ENCODE measurements at regions of chr13 and their contacts with region 1.

Region 1: DNA sequence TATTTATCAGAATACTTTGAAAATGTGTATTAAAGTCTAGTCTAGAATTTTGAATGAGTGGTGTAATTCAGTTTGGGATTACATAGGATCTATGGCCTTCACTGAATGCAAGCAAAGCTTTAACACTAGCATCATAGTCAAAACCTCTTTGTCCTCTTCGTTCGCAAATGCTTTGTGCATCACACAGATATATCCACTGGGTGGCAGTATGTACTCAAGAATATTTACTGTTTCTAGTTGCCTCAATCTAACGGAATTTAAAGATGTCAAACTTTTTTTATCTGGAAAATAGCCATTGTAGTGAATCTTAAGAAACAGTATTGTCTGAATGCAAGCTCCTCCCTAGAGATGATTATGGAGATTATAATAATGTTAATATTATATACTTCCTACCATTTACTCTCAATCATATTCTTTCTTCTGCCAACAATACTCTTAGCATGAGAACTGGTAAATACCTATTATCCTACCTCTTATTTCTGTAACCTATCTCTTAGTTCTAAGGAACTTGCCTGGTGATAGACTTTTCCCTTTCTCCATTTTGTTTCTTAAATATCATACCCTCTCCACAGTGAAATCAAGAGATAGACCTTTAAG is 25.8 kb downstream of the LACC1 start:
- DNase-seq: no peak
- H3K4me3 ChIP-seq: no peak overlapping the region
- H3K27ac ChIP-seq: no peak overlapping the region
- H3K4me1 ChIP-seq: peaks cover 0 to 12% (median 5%) of the 10 kb centered on the region in 4 donors
- H3K27me3 ChIP-seq: no peaks in the 10 kb centered on the region
- CTCF ChIP-seq: peak; percentile 66 to 80 (median 76)
- EP300 ChIP-seq: no peak
- POLR2A ChIP-seq: no peak

Region 2: GRCh38 chr13:43933378-43933777 is 27.8 kb after region 1 on chr13:
- intact Hi-C with region 1: no loop called
- DNase-seq: no peak
- H3K4me3 ChIP-seq: no peak overlapping the region
- H3K27ac ChIP-seq: no peak overlapping the region
- H3K4me1 ChIP-seq: peaks cover 0 to 20% (median 7%) of the 10 kb centered on the region in 4 donors
- H3K27me3 ChIP-seq: no peaks in the 10 kb centered on the region
- CTCF ChIP-seq: no peak
- EP300 ChIP-seq: no peak
- POLR2A ChIP-seq: no peak

Region 3: DNA sequence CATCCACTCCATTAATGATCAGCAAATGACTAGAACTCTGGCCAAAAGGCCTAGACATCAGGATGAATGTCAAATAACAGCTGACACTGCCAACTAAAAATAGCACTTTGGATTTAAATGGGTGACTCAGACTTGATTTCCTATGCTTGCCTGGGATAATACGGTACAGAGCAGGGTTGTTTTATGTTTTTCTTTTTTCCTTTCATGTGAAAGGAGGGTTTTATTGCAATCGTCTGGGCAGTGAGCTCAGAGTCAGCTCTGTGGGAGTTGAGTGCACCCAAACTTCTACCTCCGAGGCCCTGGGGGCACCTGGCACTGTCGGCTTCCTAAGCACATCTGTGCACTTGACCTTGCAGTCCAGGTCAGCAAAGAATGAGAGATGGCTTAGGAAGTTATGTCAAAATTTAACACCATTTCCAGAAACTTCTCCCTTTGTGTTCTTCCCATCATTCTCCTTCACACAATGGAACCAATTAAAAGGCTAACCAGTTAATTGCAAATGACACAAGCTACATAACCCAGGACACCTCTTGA is 108.3 kb after region 1 on chr13:
- intact Hi-C with region 1: no loop called
- DNase-seq: no peak
- H3K4me3 ChIP-seq: no peak overlapping the region
- H3K27ac ChIP-seq: peak overlapping the region; percentile 19 to 48 (median 44)
- H3K4me1 ChIP-seq: peaks cover 0 to 19% (median 12%) of the 10 kb centered on the region in 4 donors
- H3K27me3 ChIP-seq: no peaks in the 10 kb centered on the region
- CTCF ChIP-seq: no peak
- EP300 ChIP-seq: no peak
- POLR2A ChIP-seq: no peak

Region 4: GRCh38 chr13:44128552-44129001 is 223.0 kb after region 1 on chr13:
- intact Hi-C with region 1: loop called (anchors 5 kb)
- DNase-seq: peak; percentile 68
- H3K4me3 ChIP-seq: no peak overlapping the region
- H3K27ac ChIP-seq: peak overlapping the region in 2 of 4 donors; percentile 37 to 45
- H3K4me1 ChIP-seq: peaks cover 0 to 10% (median 3%) of the 10 kb centered on the region in 4 donors
- H3K27me3 ChIP-seq: no peaks in the 10 kb centered on the region
- CTCF ChIP-seq: peak in 1 of 4 experiments; percentile 19
- EP300 ChIP-seq: no peak
- POLR2A ChIP-seq: no peak

Region 5: DNA sequence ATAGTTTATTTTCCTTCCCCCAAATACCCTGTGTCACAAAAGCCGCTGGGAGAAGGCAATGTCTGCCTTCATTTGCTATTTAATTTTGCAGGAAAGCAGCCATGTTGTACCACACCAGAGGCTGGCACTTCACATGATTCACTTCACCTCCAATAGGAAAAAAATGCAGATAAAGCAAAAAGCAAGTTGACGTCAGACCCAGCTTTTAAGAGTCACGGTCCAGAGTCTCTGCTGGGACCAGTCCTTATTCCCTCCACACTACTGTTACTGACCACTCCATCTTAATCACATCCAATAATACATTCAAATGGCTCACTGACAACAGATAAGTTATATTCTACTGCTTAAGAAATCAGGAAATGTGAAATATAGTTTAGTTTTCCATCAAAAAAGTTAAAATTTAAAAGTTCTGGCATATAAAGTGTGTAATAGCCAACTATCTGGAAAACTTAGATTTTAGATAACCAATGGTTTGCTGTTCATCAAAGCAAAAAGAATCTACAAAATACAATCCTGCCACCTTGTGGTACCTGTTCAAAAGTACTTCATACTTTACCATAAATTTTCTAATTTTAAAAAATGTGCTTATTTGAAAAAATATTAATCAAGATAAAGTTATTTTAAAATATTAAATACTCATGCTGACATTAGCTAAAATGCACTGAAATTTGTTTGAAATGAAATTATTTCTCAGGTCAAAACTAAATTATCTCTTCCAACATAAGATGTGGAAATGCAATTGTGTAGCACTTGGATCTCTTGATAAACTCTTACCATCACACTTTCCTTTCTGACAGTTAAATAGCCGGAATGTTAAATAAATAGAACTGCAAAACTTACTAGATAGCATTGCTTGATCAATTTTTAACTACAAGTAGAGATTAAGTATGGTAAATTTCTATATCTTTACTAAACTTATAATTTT is 565.4 kb after region 1 on chr13:
- intact Hi-C with region 1: loop called (anchors 2 kb)
- DNase-seq: no peak
- H3K4me3 ChIP-seq: no peak overlapping the region
- H3K27ac ChIP-seq: no peak overlapping the region
- H3K4me1 ChIP-seq: peaks cover 0 to 15% (median 0%) of the 10 kb centered on the region in 4 donors
- H3K27me3 ChIP-seq: no peaks in the 10 kb centered on the region
- CTCF ChIP-seq: peak in 3 of 4 experiments; percentile 33 to 42 (median 37)
- EP300 ChIP-seq: no peak
- POLR2A ChIP-seq: no peak